ENCODE measurements at regions of chr5 and their contacts with region 1.

Region 1: DNA sequence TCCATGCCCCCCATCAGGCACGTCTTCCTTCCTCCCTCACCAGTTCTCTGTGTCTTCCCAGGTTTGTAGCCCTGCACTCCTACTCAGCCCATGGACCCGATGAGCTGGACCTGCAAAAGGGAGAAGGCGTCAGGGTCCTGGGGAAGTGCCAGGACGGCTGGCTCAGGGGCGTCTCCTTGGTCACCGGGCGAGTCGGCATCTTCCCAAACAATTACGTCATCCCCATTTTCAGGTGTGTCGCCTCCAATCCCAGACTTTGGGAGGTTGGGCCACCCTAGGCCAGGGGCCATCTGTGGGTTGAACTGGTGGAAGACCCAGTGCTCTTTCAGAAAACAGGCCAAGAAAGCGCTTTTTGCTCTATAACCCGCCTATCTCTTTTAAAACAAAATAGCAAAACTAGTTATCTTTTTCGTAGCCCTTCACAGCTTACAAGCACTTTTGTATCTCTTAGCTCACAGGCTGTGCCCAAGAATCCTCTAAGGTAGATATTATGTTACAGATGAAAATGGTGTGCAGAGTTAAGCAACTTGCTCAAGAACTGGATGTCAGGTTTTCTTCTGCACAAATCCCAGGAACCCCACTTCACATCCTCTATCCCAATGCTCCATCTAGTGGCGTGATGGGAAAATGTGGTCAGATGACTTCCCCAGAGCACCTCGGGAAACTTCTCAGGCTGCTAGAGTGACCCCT is 56.2 kb downstream of the PLAC8L1 start:
- DNase-seq: peak; percentile 78
- H3K4me3 Mint-ChIP-seq: no peak overlapping the region
- H3K27ac Mint-ChIP-seq: peak overlapping the region; percentile 22
- H3K4me1 Mint-ChIP-seq: peaks cover 35% of the 10 kb centered on the region
- H3K27me3 Mint-ChIP-seq: no peaks in the 10 kb centered on the region
- CTCF ChIP-seq: peak; percentile 86

Region 2: GRCh38 chr5:145687943-145688342 is 361.2 kb before region 1 on chr5:
- CTCF ChIA-PET with region 1: no interaction called
- intact Hi-C with region 1: loop called (anchors 1 kb)
- DNase-seq: no peak
- H3K4me3 Mint-ChIP-seq: no peak overlapping the region
- H3K27ac Mint-ChIP-seq: no peak overlapping the region
- H3K4me1 Mint-ChIP-seq: no peaks in the 10 kb centered on the region
- H3K27me3 Mint-ChIP-seq: no peaks in the 10 kb centered on the region
- CTCF ChIP-seq: no peak

Region 3: GRCh38 chr5:145697251-145697990 is 351.7 kb before region 1 on chr5:
- CTCF ChIA-PET with region 1: no interaction called
- intact Hi-C with region 1: loop called (anchors 2 kb)
- DNase-seq: peak; percentile 54
- H3K4me3 Mint-ChIP-seq: no peak overlapping the region
- H3K27ac Mint-ChIP-seq: no peak overlapping the region
- H3K4me1 Mint-ChIP-seq: no peaks in the 10 kb centered on the region
- H3K27me3 Mint-ChIP-seq: no peaks in the 10 kb centered on the region
- CTCF ChIP-seq: peak; percentile 55

Region 4: GRCh38 chr5:145825751-145826180 is 223.4 kb before region 1 on chr5:
- CTCF ChIA-PET with region 1: no interaction called
- intact Hi-C with region 1: loop called (anchors 5 kb)
- DNase-seq: peak; percentile 31
- H3K4me3 Mint-ChIP-seq: no peak overlapping the region
- H3K27ac Mint-ChIP-seq: no peak overlapping the region
- H3K4me1 Mint-ChIP-seq: peaks cover 17% of the 10 kb centered on the region
- H3K27me3 Mint-ChIP-seq: no peaks in the 10 kb centered on the region
- CTCF ChIP-seq: peak; percentile 89

Region 5: GRCh38 chr5:145908205-145908945 is 140.8 kb before region 1 on chr5:
- CTCF ChIA-PET with region 1: interaction called, 3 read pairs
- intact Hi-C with region 1: loop called (anchors 1 kb)
- DNase-seq: peak; percentile 24
- H3K4me3 Mint-ChIP-seq: no peak overlapping the region
- H3K27ac Mint-ChIP-seq: no peak overlapping the region
- H3K4me1 Mint-ChIP-seq: peaks cover 7% of the 10 kb centered on the region
- H3K27me3 Mint-ChIP-seq: no peaks in the 10 kb centered on the region
- CTCF ChIP-seq: no peak

Region 6: DNA sequence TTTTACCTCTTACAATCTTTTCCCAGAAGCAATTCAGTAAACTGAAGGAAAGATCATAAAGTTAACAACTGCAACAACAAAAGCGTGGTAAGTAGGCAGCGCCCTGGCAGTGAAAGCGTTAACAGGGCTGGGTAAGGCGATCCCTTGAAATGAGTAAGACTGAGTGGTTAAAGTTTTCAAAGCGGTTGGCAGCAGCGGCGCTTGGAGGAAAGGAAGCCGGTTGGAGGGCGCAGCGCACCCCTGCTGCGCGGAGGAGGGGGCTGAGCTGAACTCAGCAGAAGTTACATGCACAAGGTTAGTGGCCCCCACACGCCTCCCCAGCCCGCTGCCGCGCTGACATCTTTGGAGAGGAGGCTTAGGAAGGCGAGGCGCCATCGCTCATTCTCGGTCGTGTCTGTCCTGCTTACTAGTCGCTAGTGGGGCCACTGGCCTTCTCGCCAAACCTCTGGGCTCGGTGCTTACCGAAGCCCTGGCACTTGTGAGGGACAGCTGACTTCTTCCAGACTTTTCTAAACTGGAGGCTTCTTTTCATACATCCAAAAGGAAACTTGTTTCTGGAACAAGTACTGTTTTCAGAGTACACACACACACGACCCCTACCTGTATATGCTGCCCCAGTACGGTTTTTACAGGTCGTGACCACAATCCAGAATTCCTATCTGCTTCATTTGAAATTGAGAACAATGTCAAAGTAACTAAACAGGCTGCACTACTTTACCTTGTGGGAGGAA is 112.6 kb before region 1 on chr5 and contains the start of gene SH3RF2:
- CTCF ChIA-PET with region 1: interaction called, 3 read pairs
- intact Hi-C with region 1: loop called (anchors 2 kb)
- DNase-seq: peak; percentile 76
- H3K4me3 Mint-ChIP-seq: peak within 1 kb of the TSS; percentile 76
- H3K27ac Mint-ChIP-seq: peak within 1 kb of the TSS; percentile 73
- H3K4me1 Mint-ChIP-seq: peaks cover 73% of the 10 kb centered on the region
- H3K27me3 Mint-ChIP-seq: no peaks in the 10 kb centered on the region
- CTCF ChIP-seq: no peak
- total RNA-seq, gene SH3RF2: 21.9 and 25.1 TPM in 2 replicates

Region 7: GRCh38 chr5:146301626-146302025 is 252.5 kb after region 1 on chr5:
- CTCF ChIA-PET with region 1: no interaction called
- intact Hi-C with region 1: no loop called
- DNase-seq: no peak
- H3K4me3 Mint-ChIP-seq: no peak overlapping the region
- H3K27ac Mint-ChIP-seq: no peak overlapping the region
- H3K4me1 Mint-ChIP-seq: no peaks in the 10 kb centered on the region
- H3K27me3 Mint-ChIP-seq: no peaks in the 10 kb centered on the region
- CTCF ChIP-seq: no peak

Measured in Calu3 (cell line).